ENCODE measurements at regions of chr22 and their contacts with region 1.

Region 1: GRCh38 chr22:36194971-36195370 is 6.6 kb downstream of the APOL4 start:
- DNase-seq: peak; percentile 78
- H3K4me3 ChIP-seq: no peak overlapping the region
- H3K27ac ChIP-seq: no peak overlapping the region
- H3K4me1 ChIP-seq: peaks cover 31% of the 10 kb centered on the region
- H3K27me3 ChIP-seq: no peaks in the 10 kb centered on the region
- CTCF ChIP-seq: peak; percentile 80

Region 2: DNA sequence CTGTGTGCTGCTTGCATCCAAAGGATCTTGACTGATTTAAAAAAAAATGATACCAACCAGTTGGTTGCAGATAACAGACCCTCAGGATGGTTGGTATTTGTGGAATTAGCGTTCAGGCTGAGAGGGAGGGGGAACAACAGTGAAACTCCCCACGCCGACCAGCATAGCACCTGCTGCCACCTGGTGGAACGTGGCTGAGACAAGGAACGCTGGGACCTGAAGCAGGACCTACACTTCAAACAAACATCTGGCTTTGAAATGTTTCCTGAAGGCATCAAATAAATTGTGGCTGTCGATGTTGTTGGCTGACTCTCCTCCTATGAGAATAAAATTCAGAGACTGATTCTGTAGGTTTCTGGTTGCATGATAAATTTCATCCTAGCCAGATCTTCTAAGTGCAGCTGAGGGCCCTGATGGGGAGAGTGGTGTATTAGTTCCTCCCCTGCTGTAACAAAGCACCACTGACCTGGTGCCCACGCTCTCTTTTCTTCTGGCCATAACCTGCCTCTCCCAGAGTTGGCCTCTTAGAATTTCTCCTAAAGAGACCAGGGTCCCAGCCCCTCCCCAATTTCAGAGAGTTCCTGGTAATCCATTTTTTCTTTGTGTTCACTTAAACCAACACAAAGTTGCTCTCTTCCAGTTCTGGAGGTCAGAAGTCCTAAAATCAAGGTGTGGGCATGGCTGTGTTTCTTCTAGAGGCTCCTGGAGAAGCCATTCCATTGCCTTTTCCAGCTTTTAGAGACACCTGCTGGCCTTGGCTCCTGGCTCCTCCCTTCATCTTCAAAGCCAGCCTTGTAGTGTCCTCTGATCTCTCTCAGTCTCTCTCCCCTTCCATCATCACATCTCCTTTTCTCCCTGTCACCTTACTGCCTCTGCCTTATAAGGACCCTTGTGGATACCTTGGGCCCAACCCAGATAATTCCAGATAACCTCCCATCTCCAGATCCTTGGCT is 27.1 kb after region 1 on chr22:
- CTCF ChIA-PET with region 1: no interaction called
- POLR2A ChIA-PET with region 1: no interaction called
- intact Hi-C with region 1: loop called (anchors 1 kb)
- DNase-seq: peak; percentile 49
- H3K4me3 ChIP-seq: no peak overlapping the region
- H3K27ac ChIP-seq: no peak overlapping the region
- H3K4me1 ChIP-seq: no peaks in the 10 kb centered on the region
- H3K27me3 ChIP-seq: no peaks in the 10 kb centered on the region
- CTCF ChIP-seq: peak; percentile 75

Region 3: DNA sequence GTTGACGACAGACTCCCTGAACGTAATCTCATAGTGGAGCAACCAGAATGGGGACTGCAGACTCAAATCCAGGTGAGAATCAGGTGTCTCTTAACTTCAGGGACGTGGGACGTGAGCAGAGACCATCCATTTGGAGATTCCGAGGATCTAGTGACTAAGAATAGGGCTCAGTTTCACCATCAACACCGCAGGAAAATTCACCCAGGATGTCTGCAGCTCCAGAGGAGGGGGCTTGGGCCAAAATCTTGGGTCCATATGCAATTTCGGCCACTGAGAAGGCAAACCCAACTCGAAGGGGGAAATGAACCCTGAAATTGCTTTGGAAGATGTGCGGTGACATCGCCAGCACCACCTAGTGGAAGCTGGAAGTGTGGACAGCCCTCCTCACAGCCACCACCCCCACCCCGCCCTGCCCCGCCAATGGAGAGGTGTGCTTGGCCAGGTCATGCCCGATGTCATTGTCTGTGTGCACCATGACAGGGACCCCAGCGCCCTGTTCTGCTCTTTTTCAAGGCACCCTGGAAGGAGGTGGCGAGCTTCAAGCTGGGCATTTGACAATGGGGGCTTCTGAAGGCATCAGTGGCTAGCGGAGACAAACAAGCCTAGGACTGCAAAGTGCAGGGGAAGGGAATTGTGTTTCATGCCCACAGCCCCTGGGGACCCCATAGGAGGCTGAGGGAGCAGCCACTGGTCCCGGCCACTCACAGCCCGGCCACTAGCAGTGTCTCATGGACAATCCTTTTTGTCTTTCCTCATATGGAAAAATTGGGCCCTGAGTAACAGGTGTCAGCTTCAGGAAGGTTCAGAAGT is 82.7 kb after region 1 on chr22:
- CTCF ChIA-PET with region 1: interaction called, 7 read pairs
- POLR2A ChIA-PET with region 1: no interaction called
- intact Hi-C with region 1: loop called (anchors 5 kb)
- DNase-seq: peak; percentile 65
- H3K4me3 ChIP-seq: no peak overlapping the region
- H3K27ac ChIP-seq: no peak overlapping the region
- H3K4me1 ChIP-seq: no peaks in the 10 kb centered on the region
- H3K27me3 ChIP-seq: no peaks in the 10 kb centered on the region
- CTCF ChIP-seq: peak; percentile 79

Measured in A673 (cell line).